ENCODE measurements at regions of chr14 and their contacts with region 1.

Region 1: DNA sequence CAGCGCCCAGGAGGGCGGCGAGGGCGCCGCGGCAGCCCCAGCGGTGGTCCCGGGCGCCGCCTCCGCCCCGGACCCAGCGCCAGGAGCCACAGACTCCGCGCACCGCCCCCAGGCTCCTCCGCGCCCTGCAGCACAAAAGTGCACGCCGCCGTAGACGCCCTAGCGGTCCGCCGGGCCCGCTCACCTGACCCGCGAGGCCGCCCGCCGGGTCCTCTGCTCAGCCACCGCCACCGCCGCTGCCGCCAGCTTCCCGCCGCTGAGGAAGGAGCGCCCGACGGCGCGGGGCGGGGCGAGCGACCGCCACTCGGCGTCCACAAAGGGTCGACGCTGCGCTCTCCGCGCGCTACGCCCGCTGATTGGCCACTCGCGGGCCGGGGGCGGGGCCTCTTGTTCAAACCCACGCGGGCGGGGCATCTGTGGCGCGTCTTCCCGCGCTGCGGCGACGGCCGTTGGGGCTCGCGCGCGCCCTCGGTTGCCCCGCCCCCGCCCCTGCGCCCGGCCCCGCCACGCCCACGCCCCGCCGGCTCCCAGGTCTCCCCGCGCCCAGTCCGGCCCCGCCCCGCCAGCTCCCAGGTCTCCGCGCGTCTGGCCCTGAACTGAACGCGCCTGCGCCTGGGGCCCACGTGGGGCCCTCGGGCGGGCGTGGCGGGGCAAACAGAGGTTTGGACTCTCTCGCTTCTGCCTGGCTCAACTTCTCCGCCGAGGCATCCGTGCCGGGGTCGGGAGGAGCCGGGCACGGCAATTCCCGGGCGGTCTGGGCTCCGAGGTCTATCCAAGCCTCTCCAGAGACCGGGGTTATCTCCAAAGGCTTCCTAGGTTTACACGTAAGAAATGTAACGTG is at the start of gene CDCA4:
- DNase-seq: peak; percentile 98
- H3K4me3 Mint-ChIP-seq: peak within 1 kb of the TSS; percentile 98
- H3K27ac Mint-ChIP-seq: peak within 1 kb of the TSS; percentile 87
- H3K4me1 Mint-ChIP-seq: peaks cover 71% of the 10 kb centered on the region
- H3K27me3 Mint-ChIP-seq: no peaks in the 10 kb centered on the region
- total RNA-seq, gene CDCA4: 59.6 to 60.4 TPM

Region 2: GRCh38 chr14:104499784-104500760 is 521.0 kb before region 1 on chr14:
- CTCF ChIA-PET with region 1: no interaction called
- intact Hi-C with region 1: no loop called
- DNase-seq: no peak
- H3K4me3 Mint-ChIP-seq: no peak overlapping the region
- H3K27ac Mint-ChIP-seq: no peak overlapping the region
- H3K4me1 Mint-ChIP-seq: no peaks in the 10 kb centered on the region
- H3K27me3 Mint-ChIP-seq: peaks cover 6% of the 10 kb centered on the region

Region 3: GRCh38 chr14:104976198-104977007 is 44.6 kb before region 1 on chr14:
- CTCF ChIA-PET with region 1: interaction called, 4 read pairs
- intact Hi-C with region 1: loop called (anchors 2 kb)
- DNase-seq: peak; percentile 89
- H3K4me3 Mint-ChIP-seq: peak overlapping the region; percentile 30
- H3K27ac Mint-ChIP-seq: no peak overlapping the region
- H3K4me1 Mint-ChIP-seq: peaks cover 11% of the 10 kb centered on the region
- H3K27me3 Mint-ChIP-seq: peaks cover 17% of the 10 kb centered on the region

Region 4: DNA sequence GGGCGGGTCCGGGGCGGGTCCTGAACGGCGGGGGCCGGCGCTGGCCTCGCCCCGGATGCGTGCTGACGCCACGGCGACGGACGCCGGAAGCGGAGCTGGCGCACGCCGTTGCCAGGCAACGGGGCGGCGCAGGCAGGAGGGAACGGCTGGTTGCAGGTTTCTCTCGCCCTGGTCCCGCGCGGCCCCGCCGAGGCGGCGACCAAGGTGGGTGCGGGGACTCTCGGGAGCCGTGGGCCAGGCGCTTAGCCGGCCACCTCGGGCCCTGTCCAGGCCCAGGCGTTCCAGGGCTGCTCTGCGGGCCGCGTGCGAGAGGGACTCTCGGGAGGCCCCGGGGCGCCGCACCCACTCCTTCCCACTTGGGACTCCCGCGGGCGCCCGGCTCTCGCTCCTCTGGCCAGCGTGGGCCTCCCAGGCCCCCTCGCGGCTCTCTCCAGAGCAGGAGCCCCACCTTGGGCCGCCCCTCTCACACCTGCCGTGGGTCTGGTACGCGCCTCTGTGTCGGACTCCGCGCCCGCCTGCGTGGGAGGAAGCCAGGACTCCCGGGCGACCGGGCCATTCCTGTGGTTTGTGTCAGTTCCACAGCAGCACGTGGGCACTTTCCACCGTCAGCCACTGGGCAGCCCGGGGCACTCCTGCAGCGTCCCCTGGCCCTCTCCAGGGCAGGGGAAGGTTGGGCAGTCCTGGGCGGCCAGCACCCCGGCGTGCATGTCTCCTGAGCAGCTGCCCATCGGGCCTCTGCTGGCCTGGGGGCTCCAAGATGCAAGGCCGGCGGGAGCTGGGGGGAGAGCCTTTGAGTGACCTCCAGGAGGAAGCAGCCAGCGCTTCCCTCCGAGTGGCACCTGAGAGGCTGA is 35.1 kb before region 1 on chr14 and contains the start of gene CLBA1:
- CTCF ChIA-PET with region 1: interaction called, 3 read pairs
- intact Hi-C with region 1: loop called (anchors 1 kb)
- DNase-seq: peak; percentile 81
- H3K4me3 Mint-ChIP-seq: peak within 1 kb of the TSS; percentile 65
- H3K27ac Mint-ChIP-seq: peak within 1 kb of the TSS; percentile 44
- H3K4me1 Mint-ChIP-seq: peaks cover 5% of the 10 kb centered on the region
- H3K27me3 Mint-ChIP-seq: no peaks in the 10 kb centered on the region
- total RNA-seq, gene CLBA1: 0.40 to 0.43 TPM

Region 5: DNA sequence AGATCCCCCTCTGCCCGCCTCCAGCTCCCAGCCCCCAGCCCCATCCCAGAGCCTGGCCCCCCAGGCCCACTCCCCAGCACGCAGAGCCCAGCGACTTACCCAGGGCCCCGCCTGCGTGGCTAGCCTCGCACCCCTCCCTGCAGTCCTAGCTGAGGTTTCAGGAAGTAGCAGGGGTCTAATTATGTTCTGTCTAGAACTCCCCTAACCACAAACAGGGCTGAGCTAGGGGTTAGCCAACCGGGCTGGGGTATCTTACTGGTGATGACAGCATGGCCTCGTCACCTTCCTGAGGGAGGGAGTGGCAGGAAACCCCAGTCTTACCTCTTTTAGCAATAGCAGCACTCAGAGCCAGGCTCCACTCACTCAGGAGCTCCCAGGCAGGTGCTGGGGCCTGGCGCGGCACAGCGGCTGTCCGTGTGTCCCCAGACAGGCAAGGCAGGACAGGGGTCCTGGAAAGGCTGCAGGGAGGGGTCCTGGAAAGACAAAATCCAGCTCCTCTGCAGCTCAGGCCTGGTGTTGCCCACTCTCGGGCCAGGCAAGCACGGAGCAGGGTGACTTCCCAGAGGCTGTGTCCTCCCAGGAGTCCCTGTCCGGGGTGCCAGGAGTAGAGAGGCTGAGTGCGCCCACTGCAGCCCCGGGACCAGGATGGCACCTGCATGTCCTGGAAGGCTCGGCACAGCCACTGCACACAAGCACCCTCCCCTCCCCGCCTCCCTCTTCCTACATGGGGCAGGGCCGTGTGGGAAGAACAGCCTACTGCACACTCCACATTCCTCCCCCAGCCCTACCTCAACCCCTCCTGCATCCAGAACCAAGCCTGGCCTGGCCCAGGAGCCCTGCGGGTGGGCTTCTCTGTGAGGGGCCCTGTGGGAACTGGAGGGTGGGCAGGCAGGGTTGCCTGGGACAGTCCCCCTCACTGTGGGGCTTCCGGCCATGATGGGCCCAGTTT is 44.5 kb after region 1 on chr14 and contains the start of gene GPR132:
- CTCF ChIA-PET with region 1: interaction called, 3 read pairs
- intact Hi-C with region 1: loop called (anchors 1 kb)
- DNase-seq: peak; percentile 97
- H3K4me3 Mint-ChIP-seq: peak within 1 kb of the TSS; percentile 84
- H3K27ac Mint-ChIP-seq: peak within 1 kb of the TSS; percentile 96
- H3K4me1 Mint-ChIP-seq: peaks cover 81% of the 10 kb centered on the region
- H3K27me3 Mint-ChIP-seq: no peaks in the 10 kb centered on the region
- total RNA-seq, gene GPR132: 11.3 to 15.3 TPM

Region 6: DNA sequence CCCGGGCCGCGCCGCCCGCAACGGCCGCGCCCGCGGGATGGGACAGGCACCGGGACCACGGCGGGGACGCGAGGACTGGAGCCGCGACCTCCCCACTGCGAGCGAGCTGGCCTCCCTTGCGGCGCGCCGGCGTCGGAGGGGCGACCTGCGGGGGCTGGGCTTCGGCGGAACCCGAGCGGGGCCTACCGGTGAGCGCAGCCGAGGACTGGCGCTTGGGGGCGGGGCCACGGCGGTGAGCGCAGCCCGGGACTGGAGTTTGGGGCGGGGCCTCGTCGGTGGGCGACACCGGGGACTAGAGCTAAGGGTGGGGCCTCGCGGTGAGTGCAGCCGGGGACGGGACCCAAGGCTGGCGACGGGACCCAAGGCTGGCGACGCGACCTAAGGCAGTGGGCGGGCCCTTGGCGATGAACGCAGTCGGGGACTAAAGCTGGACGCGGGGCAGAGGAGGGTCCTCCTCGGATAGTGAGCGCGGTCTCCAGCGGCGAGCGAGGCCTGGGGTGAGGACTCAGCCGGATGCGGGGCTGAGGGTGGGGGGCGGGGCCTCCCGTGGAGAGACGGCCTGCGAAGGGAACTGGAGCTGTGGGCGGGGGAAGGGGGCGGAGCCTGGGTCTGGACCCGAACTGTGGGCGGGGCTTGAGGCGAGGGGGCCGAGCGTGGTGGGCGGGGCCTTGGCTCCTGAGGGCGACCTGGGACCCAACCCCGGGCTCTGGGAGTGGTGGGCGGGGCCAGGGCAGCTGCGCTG is 279.9 kb after region 1 on chr14 and contains the start of gene BRF1:
- CTCF ChIA-PET with region 1: no interaction called
- intact Hi-C with region 1: loop called (anchors 2 kb)
- DNase-seq: peak; percentile 99
- H3K4me3 Mint-ChIP-seq: peak within 1 kb of the TSS; percentile 87
- H3K27ac Mint-ChIP-seq: peak within 1 kb of the TSS; percentile 88
- H3K4me1 Mint-ChIP-seq: peaks cover 35% of the 10 kb centered on the region
- H3K27me3 Mint-ChIP-seq: no peaks in the 10 kb centered on the region
- total RNA-seq, gene BRF1: 20.6 to 23.4 TPM

Region 7: DNA sequence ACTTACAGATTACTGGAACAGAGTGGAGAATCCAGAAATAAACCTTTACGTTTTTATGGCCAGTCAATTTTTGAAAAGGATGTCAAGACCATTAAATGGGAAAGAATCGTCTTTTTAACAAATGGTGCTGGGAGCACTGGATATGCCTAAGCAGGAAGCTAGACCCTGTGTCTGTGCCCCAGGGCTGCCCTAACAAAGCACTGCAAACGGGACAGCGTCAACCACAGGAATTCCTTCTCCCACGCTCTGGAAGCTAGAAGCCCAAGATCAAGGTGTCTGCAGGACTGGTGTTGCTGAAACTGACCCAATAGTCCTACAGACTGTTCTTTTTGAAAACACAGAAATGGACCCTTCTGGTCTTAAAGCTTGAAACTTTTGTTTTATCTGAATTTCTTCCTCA is 496.1 kb after region 1 on chr14:
- CTCF ChIA-PET with region 1: no interaction called
- intact Hi-C with region 1: no loop called
- DNase-seq: no peak
- H3K4me3 Mint-ChIP-seq: no peak overlapping the region
- H3K27ac Mint-ChIP-seq: no peak overlapping the region
- H3K4me1 Mint-ChIP-seq: no peaks in the 10 kb centered on the region
- H3K27me3 Mint-ChIP-seq: peaks cover 32% of the 10 kb centered on the region